SK-N-SH (cell line): ENCODE measurements at regions of chr1 and their contacts with region 1.

Region 1: DNA sequence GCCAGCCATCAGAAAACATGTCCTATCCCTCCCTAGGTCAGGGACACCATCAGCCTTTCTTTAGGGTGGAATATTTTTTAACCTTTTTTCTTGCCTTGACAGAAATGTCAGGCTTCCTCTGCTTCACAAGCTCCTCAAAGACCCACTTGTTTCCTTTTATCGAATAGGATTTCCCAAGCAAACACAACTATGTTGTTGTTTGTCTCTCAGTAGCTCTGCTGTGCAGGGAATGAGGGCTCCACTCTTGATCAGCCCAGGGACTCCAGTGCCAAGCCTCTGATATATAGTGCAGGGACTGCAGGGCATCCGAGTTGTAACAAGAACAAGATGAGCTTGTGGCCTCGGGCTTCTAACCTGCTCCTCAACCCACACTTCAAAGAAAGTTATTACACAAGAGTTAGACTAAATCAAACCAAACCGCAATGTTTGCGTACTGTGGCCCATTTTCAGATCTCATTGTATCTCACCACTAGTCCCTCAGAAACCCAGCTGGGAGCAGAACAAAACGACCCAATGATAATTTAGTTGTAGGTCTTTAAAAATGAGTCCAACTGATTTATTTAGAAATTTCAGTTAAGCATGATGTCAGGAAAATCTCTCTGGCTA is 108.1 kb downstream of the ATG4C start:
- DNase-seq: no peak
- H3K4me3 ChIP-seq: no peak overlapping the region
- H3K27ac ChIP-seq: no peak overlapping the region
- H3K4me1 ChIP-seq: no peaks in the 10 kb centered on the region
- H3K27me3 ChIP-seq: no peaks in the 10 kb centered on the region
- CTCF ChIP-seq: no peak
- EP300 ChIP-seq: no peak
- RAD21 ChIP-seq: no peak

Region 2: DNA sequence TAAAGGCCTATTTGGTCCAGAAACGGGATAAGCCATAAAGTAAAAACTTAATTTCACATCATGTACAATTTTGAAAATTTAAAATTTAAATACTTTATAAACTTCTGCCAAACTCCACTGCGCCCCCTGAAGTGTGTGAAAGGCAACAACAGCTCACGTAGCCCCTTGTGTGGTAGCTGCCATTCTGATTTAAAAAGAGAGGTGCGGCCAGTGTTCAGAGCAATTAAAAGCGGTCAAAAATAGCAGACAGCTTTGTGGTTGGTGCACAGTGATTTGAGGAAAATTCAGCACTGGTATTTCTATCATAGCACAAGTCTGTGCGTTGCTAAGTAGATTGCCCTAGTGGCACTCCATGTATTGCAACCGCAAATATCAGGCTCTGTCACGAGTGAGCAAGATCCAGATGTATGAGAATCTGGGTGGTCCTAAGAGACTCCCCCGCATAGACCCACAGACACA is 14.4 kb after region 1 on chr1:
- CTCF ChIA-PET with region 1: interaction called, 35 read pairs
- POLR2A ChIA-PET with region 1: no interaction called
- DNase-seq: peak; percentile 10
- H3K4me3 ChIP-seq: no peak overlapping the region
- H3K27ac ChIP-seq: no peak overlapping the region
- H3K4me1 ChIP-seq: peaks cover 0 to 4% of the 10 kb centered on the region in 2 experiments; a peak in 2 of 4 replicates
- H3K27me3 ChIP-seq: no peaks in the 10 kb centered on the region
- CTCF ChIP-seq: peak; percentile 62
- EP300 ChIP-seq: no peak
- RAD21 ChIP-seq: peak; percentile 22; the same call in 1 of the 2 replicates